ENCODE measurements at regions of chr3 and their contacts with region 1.

Region 1: GRCh38 chr3:123559040-123559861 is 25.6 kb downstream of the HACD2 start:
- DNase-seq: peak; percentile 23 to 53 (median 41)
- H3K4me3 ChIP-seq: no peak overlapping the region
- H3K4me3 Mint-ChIP-seq: no peak overlapping the region
- H3K27ac ChIP-seq: no peak overlapping the region
- H3K27ac Mint-ChIP-seq: no peak overlapping the region
- H3K4me1 ChIP-seq: no peaks in the 10 kb centered on the region
- H3K4me1 Mint-ChIP-seq: peaks cover 2% of the 10 kb centered on the region
- H3K27me3 ChIP-seq: no peaks in the 10 kb centered on the region
- H3K27me3 Mint-ChIP-seq: peaks cover 0 to 1% (median 1%) of the 10 kb centered on the region in 3 donors
- CTCF ChIP-seq: peak; percentile 93

Region 2: DNA sequence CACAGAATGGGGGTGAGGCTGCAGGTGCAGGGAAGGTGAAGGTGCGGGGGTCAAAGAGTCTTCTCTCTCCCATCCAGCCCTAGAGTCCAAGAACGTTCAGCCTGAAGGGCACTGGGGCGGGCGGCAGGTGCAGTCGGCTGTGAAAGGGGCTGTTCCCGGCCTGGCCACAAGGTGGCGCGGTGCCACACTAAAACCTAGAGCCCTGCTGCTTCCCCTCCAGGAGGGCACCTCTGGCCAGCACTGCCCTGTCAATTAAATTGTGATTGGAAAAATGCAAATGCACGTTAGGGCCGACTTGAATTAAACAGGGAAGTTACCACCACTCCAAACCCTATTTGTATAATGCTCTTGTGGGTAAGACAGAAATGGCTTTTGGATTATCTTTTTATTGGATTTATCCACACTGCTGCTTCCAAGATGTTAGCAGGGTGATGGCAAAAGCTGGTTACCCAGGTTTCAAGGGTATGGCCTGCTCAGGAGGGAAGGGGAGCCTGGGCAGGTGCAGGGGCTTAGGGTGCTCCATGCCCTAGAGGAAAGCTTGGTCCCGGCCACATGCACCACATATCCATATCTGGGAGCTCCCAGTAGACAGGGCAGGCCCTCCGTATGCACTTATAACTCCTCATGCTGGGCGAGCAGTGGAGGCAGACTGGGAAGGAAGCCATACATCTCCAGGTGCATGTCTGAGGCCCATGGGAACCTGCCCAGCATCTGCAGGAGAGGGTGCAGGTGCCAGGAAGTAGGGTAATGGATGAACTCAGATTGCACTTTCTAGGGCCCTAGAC is 230.2 kb before region 1 on chr3:
- intact Hi-C with region 1: loop called (anchors 2 kb)
- DNase-seq: peak; percentile 30 to 53 (median 52)
- H3K4me3 ChIP-seq: no peak overlapping the region
- H3K4me3 Mint-ChIP-seq: no peak overlapping the region
- H3K27ac ChIP-seq: no peak overlapping the region
- H3K27ac Mint-ChIP-seq: no peak overlapping the region
- H3K4me1 ChIP-seq: no peaks in the 10 kb centered on the region
- H3K4me1 Mint-ChIP-seq: no peaks in the 10 kb centered on the region
- H3K27me3 ChIP-seq: no peaks in the 10 kb centered on the region
- H3K27me3 Mint-ChIP-seq: peaks cover 4 to 7% (median 5%) of the 10 kb centered on the region in 3 donors
- CTCF ChIP-seq: peak; percentile 90